Transverse colon (tissue), 4 donors: ENCODE measurements at regions of chr5 and their contacts with region 1.

Region 1: GRCh38 chr5:179176571-179177230 is 116.5 kb downstream of the ZNF354C start:
- DNase-seq: no peak
- H3K4me3 ChIP-seq: no peak overlapping the region
- H3K27ac ChIP-seq: no peak overlapping the region
- H3K4me1 ChIP-seq: no peaks in the 10 kb centered on the region
- H3K27me3 ChIP-seq: no peaks in the 10 kb centered on the region
- CTCF ChIP-seq: no peak
- EP300 ChIP-seq: no peak
- POLR2A ChIP-seq: no peak

Region 2: DNA sequence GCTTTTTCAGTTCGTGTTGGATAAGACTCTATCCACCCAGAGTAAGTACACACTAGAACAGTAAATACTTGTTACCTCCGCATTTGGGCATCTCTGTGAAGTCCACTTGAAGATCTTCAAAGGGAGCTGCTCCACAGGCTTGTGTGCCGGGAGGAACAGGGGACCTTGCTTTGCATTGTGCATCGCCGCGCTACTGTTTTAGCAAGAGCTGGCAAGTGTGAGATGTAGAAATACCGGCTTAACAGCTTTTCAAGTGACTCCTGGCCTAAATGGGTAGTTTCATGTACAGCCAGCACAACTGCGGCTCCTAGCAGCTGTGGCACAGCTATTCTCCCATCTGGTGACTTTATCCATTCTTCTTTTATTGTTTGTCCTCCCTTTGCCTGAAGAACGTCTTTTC is 124.9 kb before region 1 on chr5:
- in situ Hi-C with region 1: no loop called
- intact Hi-C with region 1: no loop called
- DNase-seq: no peak
- H3K4me3 ChIP-seq: no peak overlapping the region
- H3K27ac ChIP-seq: no peak overlapping the region
- H3K4me1 ChIP-seq: no peaks in the 10 kb centered on the region
- H3K27me3 ChIP-seq: no peaks in the 10 kb centered on the region
- CTCF ChIP-seq: no peak
- EP300 ChIP-seq: no peak
- POLR2A ChIP-seq: no peak

Region 3: DNA sequence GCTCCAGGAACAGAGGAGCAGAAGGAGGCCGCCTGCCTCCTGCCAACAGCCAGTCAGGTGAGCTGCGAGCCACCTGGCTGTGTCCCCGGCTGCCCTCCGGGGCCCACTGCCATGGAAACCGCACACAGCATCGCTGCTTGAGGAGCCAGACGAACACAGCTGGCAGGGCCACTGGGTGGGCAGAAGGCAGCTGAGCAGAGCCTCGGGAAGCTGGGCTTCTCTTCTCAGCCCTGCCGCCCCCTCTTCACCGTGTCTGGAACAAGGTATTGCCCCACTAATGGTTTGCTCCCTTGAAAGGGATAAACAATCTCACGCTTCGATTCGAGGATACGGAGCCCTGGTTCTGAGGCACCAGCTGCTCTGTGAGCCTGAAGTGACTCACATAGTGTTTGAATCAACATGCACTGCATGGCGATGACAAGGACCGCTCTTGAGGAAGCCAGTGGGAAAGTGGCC is 309.9 kb after region 1 on chr5:
- in situ Hi-C with region 1: loop called in 1 of 4 experiments (anchors 10 kb)
- intact Hi-C with region 1: no loop called
- DNase-seq: no peak
- H3K4me3 ChIP-seq: no peak overlapping the region
- H3K27ac ChIP-seq: no peak overlapping the region
- H3K4me1 ChIP-seq: no peaks in the 10 kb centered on the region
- H3K27me3 ChIP-seq: no peaks in the 10 kb centered on the region
- CTCF ChIP-seq: no peak
- EP300 ChIP-seq: no peak
- POLR2A ChIP-seq: no peak